ENCODE measurements at regions of chr5 and their contacts with region 1.

Region 1: DNA sequence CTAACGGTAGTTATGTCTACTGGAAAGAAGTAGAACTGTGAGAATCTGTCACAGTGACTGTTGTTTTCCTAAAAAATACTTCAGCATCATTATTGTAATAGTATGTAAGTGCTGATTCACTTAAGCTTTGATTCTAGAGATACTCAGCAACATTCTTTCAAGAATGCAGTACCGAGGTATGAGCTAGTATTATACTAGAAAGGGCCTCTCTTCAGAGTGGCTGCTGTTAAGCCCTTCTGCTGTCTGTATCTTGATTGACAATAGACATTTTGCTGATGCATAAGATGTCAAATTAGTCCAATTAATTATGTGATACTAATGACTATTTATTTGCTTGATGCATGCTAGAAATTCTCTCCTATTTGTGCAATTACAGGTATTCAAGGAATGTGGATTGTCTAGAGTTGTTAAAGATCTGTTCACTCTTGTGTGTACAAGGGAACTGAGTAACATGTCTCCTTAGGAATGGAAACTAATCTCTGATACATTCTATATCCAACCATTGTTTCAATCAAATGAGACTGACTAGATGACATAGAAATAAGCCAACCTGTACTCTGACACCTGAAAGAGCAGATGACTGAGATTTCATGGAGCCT is 92.3 kb upstream of the PTGER4 start:
- DNase-seq: no peak
- H3K4me3 ChIP-seq: no peak overlapping the region
- H3K27ac ChIP-seq: no peak overlapping the region
- H3K4me1 ChIP-seq: peaks cover 17% of the 10 kb centered on the region
- CTCF ChIP-seq: no peak

Region 2: GRCh38 chr5:40033411-40033810 is 554.0 kb before region 1 on chr5:
- CTCF ChIA-PET with region 1: no interaction called
- POLR2A ChIA-PET with region 1: no interaction called
- intact Hi-C with region 1: loop called (anchors 5 kb)
- DNase-seq: peak; percentile 96
- H3K4me3 ChIP-seq: peak overlapping the region; percentile 56
- H3K27ac ChIP-seq: peak overlapping the region; percentile 83
- H3K4me1 ChIP-seq: peaks cover 22% of the 10 kb centered on the region
- CTCF ChIP-seq: no peak

Region 3: DNA sequence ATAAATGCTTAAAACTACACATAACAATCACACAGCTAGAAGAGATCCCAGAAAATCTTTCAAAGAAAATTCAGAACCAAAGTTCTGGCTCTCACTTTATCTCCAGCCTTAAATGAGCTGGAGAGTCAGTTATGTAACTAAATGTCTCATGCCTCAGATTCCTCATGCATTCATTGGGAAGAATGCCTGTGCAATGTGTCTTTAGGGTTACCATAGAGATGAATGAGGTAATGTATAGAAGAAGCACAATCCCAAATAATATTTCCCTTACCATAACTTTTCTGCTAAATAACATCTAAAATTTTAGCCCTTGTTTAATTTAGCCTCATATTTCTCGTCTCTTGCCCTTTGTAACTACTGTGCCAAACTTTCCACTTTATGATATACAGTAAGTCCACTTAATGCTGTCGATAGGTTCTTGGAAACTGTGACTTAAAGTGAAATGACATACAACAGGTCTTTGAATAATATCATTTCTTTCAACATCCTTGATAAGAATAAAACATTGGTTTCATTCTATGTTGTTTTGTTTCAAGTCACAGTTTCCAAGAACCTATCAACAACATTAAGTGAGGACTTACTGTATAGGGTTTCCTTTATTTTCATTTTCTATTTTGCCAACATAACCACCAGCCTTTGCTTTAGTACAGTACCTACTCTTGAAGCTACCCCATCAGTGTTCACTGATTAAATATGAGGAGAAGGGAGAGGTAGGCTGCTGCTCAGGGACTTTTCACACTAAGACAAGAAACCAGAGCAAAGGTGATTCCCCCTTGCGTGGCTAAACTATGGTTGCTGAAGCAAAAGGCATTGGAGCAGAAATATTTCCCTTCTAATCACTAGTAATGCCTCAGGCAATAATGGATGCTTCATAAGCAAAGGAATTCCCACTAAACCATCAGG is 203.4 kb before region 1 on chr5:
- CTCF ChIA-PET with region 1: no interaction called
- POLR2A ChIA-PET with region 1: no interaction called
- intact Hi-C with region 1: loop called (anchors 5 kb)
- DNase-seq: no peak
- H3K4me3 ChIP-seq: no peak overlapping the region
- H3K27ac ChIP-seq: no peak overlapping the region
- H3K4me1 ChIP-seq: no peaks in the 10 kb centered on the region
- CTCF ChIP-seq: no peak

Region 4: GRCh38 chr5:40601208-40601868 is 14.0 kb after region 1 on chr5:
- CTCF ChIA-PET with region 1: no interaction called
- POLR2A ChIA-PET with region 1: interaction called, 13 read pairs
- intact Hi-C with region 1: no loop called
- DNase-seq: peak; percentile 21
- H3K4me3 ChIP-seq: no peak overlapping the region
- H3K27ac ChIP-seq: no peak overlapping the region
- H3K4me1 ChIP-seq: peaks cover 46% of the 10 kb centered on the region
- CTCF ChIP-seq: no peak

Region 5: GRCh38 chr5:40615586-40616170 is 28.3 kb after region 1 on chr5:
- CTCF ChIA-PET with region 1: no interaction called
- POLR2A ChIA-PET with region 1: interaction called, 11 read pairs
- intact Hi-C with region 1: no loop called
- DNase-seq: no peak
- H3K4me3 ChIP-seq: no peak overlapping the region
- H3K27ac ChIP-seq: no peak overlapping the region
- H3K4me1 ChIP-seq: no peaks in the 10 kb centered on the region
- CTCF ChIP-seq: no peak

Region 6: DNA sequence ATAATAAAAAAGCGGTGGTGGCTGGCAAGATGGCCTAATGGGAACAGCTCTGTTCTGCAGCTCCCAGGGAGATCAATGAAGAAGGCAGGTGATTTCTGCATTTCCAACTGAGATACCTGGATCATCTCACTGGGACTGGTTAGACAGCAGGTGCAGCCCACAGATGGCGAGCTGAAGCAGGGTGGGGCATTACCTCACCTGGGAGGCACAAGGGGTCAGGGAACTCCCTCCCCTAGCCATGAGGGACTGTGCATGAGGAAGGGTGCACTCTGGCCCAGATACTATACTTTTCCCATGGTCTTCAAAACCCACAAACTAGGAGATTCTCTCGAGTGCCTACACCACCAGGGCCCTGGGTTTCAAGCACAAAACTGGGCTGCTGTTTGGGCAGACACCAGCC is 46.8 kb after region 1 on chr5:
- CTCF ChIA-PET with region 1: no interaction called
- POLR2A ChIA-PET with region 1: no interaction called
- intact Hi-C with region 1: no loop called
- DNase-seq: no peak
- H3K4me3 ChIP-seq: no peak overlapping the region
- H3K27ac ChIP-seq: no peak overlapping the region
- H3K4me1 ChIP-seq: no peaks in the 10 kb centered on the region
- CTCF ChIP-seq: no peak

Region 7: GRCh38 chr5:40652441-40653220 is 65.2 kb after region 1 on chr5:
- CTCF ChIA-PET with region 1: no interaction called
- POLR2A ChIA-PET with region 1: no interaction called
- intact Hi-C with region 1: no loop called
- DNase-seq: no peak
- H3K4me3 ChIP-seq: no peak overlapping the region
- H3K27ac ChIP-seq: no peak overlapping the region
- H3K4me1 ChIP-seq: no peaks in the 10 kb centered on the region
- CTCF ChIP-seq: no peak

Region 8: GRCh38 chr5:41182666-41183065 is 595.3 kb after region 1 on chr5:
- CTCF ChIA-PET with region 1: no interaction called
- POLR2A ChIA-PET with region 1: no interaction called
- intact Hi-C with region 1: no loop called
- DNase-seq: no peak
- H3K4me3 ChIP-seq: no peak overlapping the region
- H3K27ac ChIP-seq: no peak overlapping the region
- H3K4me1 ChIP-seq: no peaks in the 10 kb centered on the region
- CTCF ChIP-seq: no peak

Measured in OCI-LY7 (cell line).